ENCODE measurements at regions of chr1 and their contacts with region 1.

Region 1: GRCh38 chr1:244964112-244964971 is 100.0 kb upstream of the HNRNPU start:
- DNase-seq: no peak
- ATAC-seq: peak; percentile 82
- H3K4me3 ChIP-seq: peak overlapping the region; percentile 0 to 33; a peak in 3 of 4 replicates
- H3K27ac ChIP-seq: peak overlapping the region; percentile 80
- H3K4me1 ChIP-seq: peaks cover 31% of the 10 kb centered on the region
- H3K27me3 ChIP-seq: no peaks in the 10 kb centered on the region
- CTCF ChIP-seq: no peak

Region 2: DNA sequence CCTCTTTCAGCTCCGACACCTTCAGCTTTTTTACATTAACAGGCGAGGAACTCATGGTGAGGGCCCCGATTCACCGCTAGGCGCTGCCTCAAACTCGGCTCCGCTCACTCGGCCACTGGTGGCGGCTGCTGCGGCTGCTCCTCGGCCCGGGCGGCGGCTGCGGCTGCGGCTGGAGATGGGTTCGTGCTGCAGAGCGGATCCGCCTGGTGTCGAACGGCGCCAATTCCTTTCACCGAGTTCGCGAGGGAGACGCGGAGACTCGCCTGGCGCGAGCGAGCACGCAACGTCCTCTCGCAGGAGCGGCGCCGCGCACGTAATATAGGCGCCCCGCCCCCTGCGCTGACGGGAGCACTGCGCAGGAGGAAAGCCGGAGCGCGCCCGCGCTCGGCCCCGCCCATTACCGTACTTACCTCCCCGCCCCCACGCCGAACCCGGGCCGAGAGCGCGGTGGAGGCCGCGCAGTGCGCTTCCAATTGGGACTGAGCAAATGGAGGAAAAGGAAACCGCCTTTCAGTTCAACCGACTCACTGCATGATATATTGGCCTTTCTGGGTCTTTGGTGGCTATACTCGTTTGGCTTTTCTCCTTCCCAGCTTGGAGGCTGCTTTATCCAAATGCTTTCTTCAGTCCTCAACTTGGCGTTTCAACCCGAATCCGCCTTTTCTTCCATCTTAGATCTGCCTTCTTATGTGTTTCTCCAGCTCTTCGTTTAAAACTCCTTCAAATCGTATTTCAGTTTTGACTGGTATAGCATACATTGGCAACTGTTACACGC is 99.9 kb before region 1 on chr1 and contains the start of gene HNRNPU:
- CTCF ChIA-PET with region 1: no interaction called
- POLR2A ChIA-PET with region 1: interaction called, 7 read pairs
- in situ Hi-C with region 1: no loop called
- intact Hi-C with region 1: loop called (anchors 2 kb)
- DNase-seq: peak; percentile 78
- ATAC-seq: peak; percentile 85
- H3K4me3 ChIP-seq: peak within 1 kb of the TSS; percentile 77 to 88
- H3K27ac ChIP-seq: peak within 1 kb of the TSS; percentile 100
- H3K4me1 ChIP-seq: peaks cover 35% of the 10 kb centered on the region
- H3K27me3 ChIP-seq: no peaks in the 10 kb centered on the region
- CTCF ChIP-seq: no peak
- total RNA-seq, gene HNRNPU: 361 TPM

Region 3: GRCh38 chr1:245986404-245987220 is 1022.3 kb after region 1 on chr1:
- CTCF ChIA-PET with region 1: no interaction called
- POLR2A ChIA-PET with region 1: no interaction called
- in situ Hi-C with region 1: no loop called
- intact Hi-C with region 1: no loop called
- DNase-seq: peak; percentile 45
- ATAC-seq: peak; percentile 93
- H3K4me3 ChIP-seq: no peak overlapping the region
- H3K27ac ChIP-seq: peak overlapping the region; percentile 73
- H3K4me1 ChIP-seq: peaks cover 22% of the 10 kb centered on the region
- H3K27me3 ChIP-seq: no peaks in the 10 kb centered on the region
- CTCF ChIP-seq: no peak

Measured in Panc1 (cell line).